ENCODE measurements at regions of chr10 and their contacts with region 1.

Region 1: GRCh38 chr10:87861953-87862678 is 1.2 kb downstream of the KLLN start:
- DNase-seq: peak; percentile 85 to 95 (median 93)
- ATAC-seq: peak; percentile 86
- H3K4me3 ChIP-seq: peak overlapping the region; percentile 90
- H3K4me3 Mint-ChIP-seq: peak overlapping the region; percentile 91 to 100 (median 96)
- H3K27ac ChIP-seq: peak overlapping the region; percentile 75
- H3K27ac Mint-ChIP-seq: peak overlapping the region; percentile 90 to 99 (median 97)
- H3K4me1 ChIP-seq: peaks cover 6 to 16% of the 10 kb centered on the region in 2 donors
- H3K4me1 Mint-ChIP-seq: peaks cover 25 to 36% (median 32%) of the 10 kb centered on the region in 7 donors
- H3K27me3 ChIP-seq: no peaks in the 10 kb centered on the region
- H3K27me3 Mint-ChIP-seq: no peaks in the 10 kb centered on the region

Region 2: DNA sequence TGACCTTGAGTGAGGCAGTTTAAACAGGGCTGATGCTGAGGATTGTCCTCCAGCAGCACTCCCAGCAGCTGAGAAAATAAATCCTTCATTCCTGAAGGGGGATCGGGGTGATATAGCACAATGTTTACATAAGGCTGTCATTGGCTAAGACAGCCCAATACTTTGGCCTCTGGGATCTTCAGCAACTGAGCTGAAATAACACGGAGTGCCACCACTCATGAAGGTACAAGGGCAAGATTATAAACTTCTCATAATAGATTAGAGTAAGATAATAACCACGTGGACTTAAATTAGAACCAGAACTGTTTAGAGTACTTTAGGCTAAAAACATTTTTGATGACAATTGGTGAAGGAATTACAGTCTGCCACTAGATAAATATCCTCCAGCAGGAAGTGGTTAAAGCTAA is 272.5 kb before region 1 on chr10:
- CTCF ChIA-PET with region 1: no interaction called
- POLR2A ChIA-PET with region 1: no interaction called
- intact Hi-C with region 1: no loop called
- DNase-seq: no peak
- ATAC-seq: no peak
- H3K4me3 ChIP-seq: no peak overlapping the region
- H3K4me3 Mint-ChIP-seq: no peak overlapping the region
- H3K27ac ChIP-seq: no peak overlapping the region
- H3K27ac Mint-ChIP-seq: no peak overlapping the region
- H3K4me1 ChIP-seq: no peaks in the 10 kb centered on the region
- H3K4me1 Mint-ChIP-seq: no peaks in the 10 kb centered on the region
- H3K27me3 ChIP-seq: no peaks in the 10 kb centered on the region
- H3K27me3 Mint-ChIP-seq: peaks cover 0 to 11% (median 0%) of the 10 kb centered on the region in 5 donors

Region 3: DNA sequence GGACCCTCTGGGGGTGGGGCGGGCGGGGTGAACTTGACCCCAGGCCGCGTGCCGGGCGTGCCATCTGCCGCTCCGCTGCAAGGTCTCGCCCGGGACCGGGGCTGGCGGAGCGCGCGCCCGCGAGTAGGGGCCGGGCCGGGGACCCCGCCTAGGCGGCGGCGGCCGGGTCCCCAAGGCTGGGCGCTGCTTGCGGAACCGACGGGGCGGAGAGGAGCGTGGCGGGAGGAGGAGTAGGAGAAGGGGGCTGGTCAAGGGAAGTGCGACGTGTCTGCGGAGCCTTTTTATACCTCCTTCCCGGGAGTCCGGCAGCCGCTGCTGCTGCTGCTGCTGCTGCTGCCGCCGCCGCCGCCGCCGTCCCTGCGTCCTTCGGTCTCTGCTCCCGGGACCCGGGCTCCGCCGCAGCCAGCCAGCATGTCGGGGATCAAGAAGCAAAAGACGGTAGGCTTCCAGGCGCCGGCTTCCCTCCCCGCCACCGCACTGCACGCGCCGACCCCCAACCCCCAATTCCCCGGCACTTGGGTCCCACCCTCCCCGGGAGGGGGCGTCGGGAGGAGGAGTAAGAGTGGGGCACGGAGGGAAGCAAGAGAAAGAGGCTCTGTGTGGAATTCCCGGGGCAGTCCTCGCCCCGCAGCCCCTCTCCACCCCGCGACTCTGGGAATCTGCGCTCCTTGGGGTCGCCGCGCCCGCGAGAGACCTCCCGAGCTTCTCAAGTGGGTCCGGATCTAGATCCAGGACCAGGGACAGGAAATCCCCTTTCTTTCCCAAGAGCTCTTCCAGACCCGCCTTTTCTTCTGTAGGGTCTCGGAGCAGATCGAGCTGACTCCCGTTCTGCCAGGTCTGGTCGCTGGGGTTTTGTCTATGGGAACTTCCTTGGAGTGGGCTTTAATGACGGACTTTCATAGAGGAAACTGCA is 202.3 kb before region 1 on chr10 and contains the start of gene PAPSS2:
- CTCF ChIA-PET with region 1: no interaction called
- POLR2A ChIA-PET with region 1: no interaction called
- intact Hi-C with region 1: loop called in 1 of 2 experiments (anchors 5 kb)
- DNase-seq: peak in 6 of 9 donors; percentile 2 to 38 (median 8)
- ATAC-seq: peak; percentile 57
- H3K4me3 ChIP-seq: peak within 1 kb of the TSS; percentile 42
- H3K4me3 Mint-ChIP-seq: peak within 1 kb of the TSS; percentile 72 to 89 (median 80)
- H3K27ac ChIP-seq: no peak within 1 kb of the TSS
- H3K27ac Mint-ChIP-seq: peak within 1 kb of the TSS in 1 of 9 donors; percentile 17
- H3K4me1 ChIP-seq: peaks cover 0 to 7% of the 10 kb centered on the region in 2 donors
- H3K4me1 Mint-ChIP-seq: peaks cover 7 to 14% (median 13%) of the 10 kb centered on the region in 7 donors
- H3K27me3 ChIP-seq: peaks cover 3 to 10% of the 10 kb centered on the region in 2 donors
- H3K27me3 Mint-ChIP-seq: peaks cover 42 to 55% (median 49%) of the 10 kb centered on the region in 5 donors
- total RNA-seq, gene PAPSS2: 0.21 to 1.6 (median 0.57) TPM

Region 4: DNA sequence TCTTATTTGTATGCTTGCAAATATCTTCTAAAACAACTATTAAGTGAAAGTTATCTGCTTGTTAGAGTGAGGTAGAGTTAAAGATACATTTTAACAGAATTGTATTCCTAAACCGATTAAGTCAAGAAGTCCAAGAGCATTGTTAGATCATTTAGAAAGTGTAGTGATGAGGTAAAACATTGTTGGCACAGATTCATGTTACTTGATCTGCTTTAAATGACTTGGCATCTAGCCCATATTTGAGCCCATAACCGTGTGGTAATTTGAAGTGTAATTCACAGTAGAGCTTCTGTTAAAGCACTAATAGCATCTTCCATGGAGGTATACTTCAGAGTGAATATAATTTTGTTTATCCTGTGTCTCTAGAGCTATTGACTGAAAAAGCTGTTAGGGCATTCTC is 63.5 kb after region 1 on chr10:
- CTCF ChIA-PET with region 1: interaction called, 4 read pairs
- POLR2A ChIA-PET with region 1: interaction called, 8 read pairs
- intact Hi-C with region 1: loop called in 1 of 2 experiments (anchors 5 kb)
- DNase-seq: no peak
- ATAC-seq: no peak
- H3K4me3 ChIP-seq: no peak overlapping the region
- H3K4me3 Mint-ChIP-seq: peak overlapping the region in 6 of 10 donors; percentile 3 to 69 (median 52)
- H3K27ac ChIP-seq: no peak overlapping the region
- H3K27ac Mint-ChIP-seq: peak overlapping the region in 4 of 9 donors; percentile 9 to 83 (median 50)
- H3K4me1 ChIP-seq: peaks cover 18 to 32% of the 10 kb centered on the region in 2 donors
- H3K4me1 Mint-ChIP-seq: peaks cover 61 to 99% (median 92%) of the 10 kb centered on the region in 7 donors
- H3K27me3 ChIP-seq: no peaks in the 10 kb centered on the region
- H3K27me3 Mint-ChIP-seq: no peaks in the 10 kb centered on the region

Region 5: DNA sequence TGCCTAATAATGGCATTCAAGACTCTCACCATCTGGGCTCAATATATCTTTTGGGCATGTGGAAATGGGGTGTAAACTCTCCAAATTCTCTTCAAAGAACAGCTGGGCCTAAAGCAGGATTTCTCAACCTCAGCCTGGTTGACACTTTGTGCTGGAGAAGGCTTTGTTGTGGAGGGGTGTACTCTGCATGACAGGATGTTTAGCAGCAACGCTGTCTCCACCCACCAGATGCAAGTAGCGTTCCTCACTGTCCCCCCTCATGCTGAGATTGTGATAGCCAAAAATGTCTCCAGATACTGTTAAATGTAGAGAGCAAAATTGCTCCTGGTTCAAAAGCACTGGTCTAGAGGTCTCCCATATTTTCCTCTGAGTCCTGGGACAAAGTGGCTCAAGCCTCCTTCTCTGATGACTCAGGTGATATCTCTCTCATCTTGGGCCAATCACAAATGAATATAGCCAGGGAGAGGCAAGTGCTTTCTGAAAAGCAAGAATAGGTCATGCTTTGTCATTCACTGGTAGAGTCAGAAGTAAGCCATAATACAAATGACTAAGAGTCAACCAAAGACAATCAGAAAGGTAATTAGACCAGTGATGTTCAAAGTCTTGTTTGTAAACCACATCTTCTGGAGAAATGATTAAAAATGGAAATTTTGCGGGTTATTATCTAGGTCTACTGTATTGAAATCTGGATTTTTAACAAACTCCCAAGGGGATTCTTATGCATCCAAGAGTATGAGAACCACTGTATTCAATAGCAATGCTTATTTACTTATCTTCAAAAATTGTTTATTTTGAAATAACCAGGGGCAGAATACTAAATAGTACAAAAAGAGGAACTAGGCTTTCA is 332.1 kb after region 1 on chr10:
- CTCF ChIA-PET with region 1: no interaction called
- POLR2A ChIA-PET with region 1: interaction called, 12 read pairs
- intact Hi-C with region 1: loop called (anchors 1 to 5 kb)
- DNase-seq: peak in 8 of 9 donors; percentile 24 to 83 (median 72)
- ATAC-seq: peak; percentile 98
- H3K4me3 ChIP-seq: peak overlapping the region; percentile 9
- H3K4me3 Mint-ChIP-seq: peak overlapping the region; percentile 61 to 80 (median 72)
- H3K27ac ChIP-seq: peak overlapping the region; percentile 53
- H3K27ac Mint-ChIP-seq: peak overlapping the region; percentile 72 to 94 (median 89)
- H3K4me1 ChIP-seq: peaks cover 32% of the 10 kb centered on the region in 2 donors
- H3K4me1 Mint-ChIP-seq: peaks cover 21 to 71% (median 52%) of the 10 kb centered on the region in 7 donors
- H3K27me3 ChIP-seq: no peaks in the 10 kb centered on the region
- H3K27me3 Mint-ChIP-seq: peaks cover 0 to 2% (median 0%) of the 10 kb centered on the region in 5 donors

Region 6: DNA sequence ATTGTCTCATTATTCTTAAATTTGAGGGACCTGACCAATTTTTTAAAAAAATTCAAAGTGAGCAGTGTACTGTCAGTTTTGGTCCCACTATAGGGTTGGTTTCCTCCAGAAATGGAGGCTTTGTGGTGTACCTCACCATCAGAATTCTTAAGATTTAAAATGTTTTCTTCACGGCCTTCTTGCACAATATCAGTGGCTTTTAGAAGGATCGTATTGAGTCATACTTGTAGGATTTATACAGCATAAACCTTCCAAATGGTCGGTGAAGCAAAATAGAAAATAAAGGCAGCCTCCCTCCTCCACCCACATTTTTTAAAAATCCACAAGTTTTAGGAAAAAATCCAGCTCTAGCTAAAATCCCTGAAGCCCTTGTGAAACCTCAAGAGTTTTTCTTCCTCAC is 594.6 kb after region 1 on chr10:
- CTCF ChIA-PET with region 1: no interaction called
- POLR2A ChIA-PET with region 1: no interaction called
- intact Hi-C with region 1: loop called in 1 of 2 experiments (anchors 1 kb)
- DNase-seq: no peak
- ATAC-seq: no peak
- H3K4me3 ChIP-seq: no peak overlapping the region
- H3K4me3 Mint-ChIP-seq: no peak overlapping the region
- H3K27ac ChIP-seq: no peak overlapping the region
- H3K27ac Mint-ChIP-seq: no peak overlapping the region
- H3K4me1 ChIP-seq: no peaks in the 10 kb centered on the region
- H3K4me1 Mint-ChIP-seq: peaks cover 0 to 5% (median 0%) of the 10 kb centered on the region in 7 donors
- H3K27me3 ChIP-seq: no peaks in the 10 kb centered on the region
- H3K27me3 Mint-ChIP-seq: peaks cover 0 to 8% (median 0%) of the 10 kb centered on the region in 5 donors

Region 7: DNA sequence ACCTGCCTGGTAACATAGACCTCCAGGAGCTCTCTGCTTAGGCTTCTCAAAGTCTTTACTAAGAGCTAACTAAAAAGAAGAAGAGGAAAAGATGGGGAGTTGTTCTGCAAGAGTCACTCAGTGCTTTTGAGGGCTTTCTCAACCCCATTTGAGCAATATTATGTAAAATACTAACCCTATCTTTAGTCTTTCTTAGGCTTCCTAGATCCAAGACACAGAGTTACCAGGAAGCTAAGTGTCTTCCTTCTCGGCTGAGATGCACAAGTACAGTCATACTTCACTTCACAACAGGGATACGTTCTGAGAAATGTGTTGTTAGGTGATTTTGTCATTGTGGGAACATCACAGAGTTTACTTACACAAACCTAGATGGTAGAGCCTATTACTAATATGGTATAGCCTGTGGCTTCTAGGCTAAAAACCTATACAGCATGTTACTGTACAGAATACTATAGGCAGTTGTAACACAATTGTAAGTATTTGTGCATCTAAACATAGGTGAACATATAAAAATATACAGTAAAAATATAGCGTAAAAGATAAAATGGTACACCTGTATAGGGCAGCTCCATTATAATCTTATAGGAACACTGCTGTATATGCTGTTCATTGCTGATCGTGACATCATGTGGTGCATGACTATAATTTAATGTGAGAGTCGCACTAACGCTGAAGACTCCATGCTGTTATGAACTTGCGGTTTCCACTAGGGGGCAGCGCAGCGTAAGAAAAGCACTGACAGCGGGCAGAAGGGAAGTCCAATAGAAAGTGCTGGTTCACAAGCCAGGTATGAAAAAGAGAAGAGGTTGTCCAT is 973.2 kb after region 1 on chr10:
- CTCF ChIA-PET with region 1: no interaction called
- POLR2A ChIA-PET with region 1: no interaction called
- intact Hi-C with region 1: loop called in 1 of 2 experiments (anchors 10 kb)
- DNase-seq: peak; percentile 65 to 86 (median 82)
- ATAC-seq: peak; percentile 95
- H3K4me3 ChIP-seq: no peak overlapping the region
- H3K4me3 Mint-ChIP-seq: no peak overlapping the region
- H3K27ac ChIP-seq: no peak overlapping the region
- H3K27ac Mint-ChIP-seq: no peak overlapping the region
- H3K4me1 ChIP-seq: peaks cover 14 to 46% of the 10 kb centered on the region in 2 donors
- H3K4me1 Mint-ChIP-seq: peaks cover 10 to 33% (median 32%) of the 10 kb centered on the region in 7 donors
- H3K27me3 ChIP-seq: no peaks in the 10 kb centered on the region
- H3K27me3 Mint-ChIP-seq: no peaks in the 10 kb centered on the region

Region 8: DNA sequence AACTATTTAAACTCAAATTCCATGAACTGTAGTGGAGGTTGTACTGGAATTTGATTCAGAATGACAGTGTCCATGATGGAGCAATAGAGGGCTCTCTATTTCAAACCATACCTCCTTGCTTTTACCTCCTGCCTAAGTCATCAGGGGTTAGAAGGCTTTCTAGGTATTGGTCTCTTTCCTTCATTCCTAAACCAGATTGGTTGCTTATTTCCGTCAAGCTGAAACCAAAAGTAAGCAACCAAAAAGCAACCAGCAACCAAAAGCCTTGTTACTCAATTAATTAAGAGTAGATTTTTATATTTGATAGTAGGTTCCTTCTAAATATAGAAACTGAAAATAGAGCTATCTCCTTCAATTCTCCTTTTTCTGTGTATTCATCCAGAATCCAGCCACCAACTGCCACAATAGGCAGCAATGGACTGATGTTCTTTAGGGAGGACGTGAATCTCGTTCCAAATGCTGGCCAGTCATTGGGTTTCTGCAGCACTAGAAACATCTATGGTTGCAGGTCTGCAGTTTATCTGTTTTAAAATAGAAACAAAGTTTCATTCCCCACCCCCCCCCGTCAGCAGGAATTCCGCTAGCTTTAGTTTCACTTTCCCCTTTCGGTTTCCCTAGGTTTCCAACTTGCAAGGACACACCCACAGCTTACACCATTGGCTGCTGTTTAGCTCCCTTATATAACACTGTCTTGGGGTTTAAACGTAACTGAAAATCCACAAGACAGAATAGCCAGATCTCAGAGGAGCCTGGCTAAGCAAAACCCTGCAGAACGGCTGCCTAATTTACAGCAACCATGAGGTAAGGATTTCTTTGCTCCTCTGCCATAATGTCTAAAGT is 1530.0 kb after region 1 on chr10 and contains the start of gene IFIT1:
- CTCF ChIA-PET with region 1: no interaction called
- POLR2A ChIA-PET with region 1: no interaction called
- intact Hi-C with region 1: loop called in 1 of 2 experiments (anchors 2 kb)
- DNase-seq: peak in 8 of 9 donors; percentile 36 to 84 (median 72)
- ATAC-seq: peak; percentile 96
- H3K4me3 ChIP-seq: peak within 1 kb of the TSS; percentile 82
- H3K4me3 Mint-ChIP-seq: peak within 1 kb of the TSS; percentile 85 to 96 (median 90)
- H3K27ac ChIP-seq: peak within 1 kb of the TSS; percentile 72
- H3K27ac Mint-ChIP-seq: peak within 1 kb of the TSS; percentile 87 to 97 (median 93)
- H3K4me1 ChIP-seq: peaks cover 14 to 19% of the 10 kb centered on the region in 2 donors
- H3K4me1 Mint-ChIP-seq: peaks cover 14 to 53% (median 45%) of the 10 kb centered on the region in 7 donors
- H3K27me3 ChIP-seq: no peaks in the 10 kb centered on the region
- H3K27me3 Mint-ChIP-seq: peaks cover 0 to 6% (median 0%) of the 10 kb centered on the region in 5 donors
- total RNA-seq, gene IFIT1: 1.7 to 15.7 (median 6.5) TPM

Measured in naive thymus-derived CD4-positive, alpha-beta T cell (primary cell).